ENCODE measurements at regions of chr1 and their contacts with region 1.

Region 1: GRCh38 chr1:226820941-226821718 is 49.3 kb upstream of the PSEN2 start:
- DNase-seq: peak; percentile 96
- H3K4me3 Mint-ChIP-seq: no peak overlapping the region
- H3K27ac Mint-ChIP-seq: peak overlapping the region; percentile 11
- H3K4me1 Mint-ChIP-seq: peaks cover 19% of the 10 kb centered on the region
- H3K27me3 Mint-ChIP-seq: no peaks in the 10 kb centered on the region
- CTCF ChIP-seq: no peak

Region 2: GRCh38 chr1:226603022-226603857 is 217.9 kb before region 1 on chr1:
- CTCF ChIA-PET with region 1: interaction called, 3 read pairs
- POLR2A ChIA-PET with region 1: interaction called, 10 read pairs
- intact Hi-C with region 1: no loop called
- DNase-seq: peak; percentile 91
- H3K4me3 Mint-ChIP-seq: peak overlapping the region; percentile 71
- H3K27ac Mint-ChIP-seq: peak overlapping the region; percentile 97
- H3K4me1 Mint-ChIP-seq: peaks cover 42% of the 10 kb centered on the region
- H3K27me3 Mint-ChIP-seq: peaks cover 8% of the 10 kb centered on the region
- CTCF ChIP-seq: no peak

Region 3: GRCh38 chr1:226973898-226974543 is 152.9 kb after region 1 on chr1:
- CTCF ChIA-PET with region 1: no interaction called
- POLR2A ChIA-PET with region 1: no interaction called
- intact Hi-C with region 1: no loop called
- DNase-seq: peak; percentile 80
- H3K4me3 Mint-ChIP-seq: peak overlapping the region; percentile 38
- H3K27ac Mint-ChIP-seq: peak overlapping the region; percentile 96
- H3K4me1 Mint-ChIP-seq: peaks cover 24% of the 10 kb centered on the region
- H3K27me3 Mint-ChIP-seq: no peaks in the 10 kb centered on the region
- CTCF ChIP-seq: no peak

Measured in MCF 10A (cell line).